ENCODE measurements at regions of chr9 and their contacts with region 1.

Region 1: DNA sequence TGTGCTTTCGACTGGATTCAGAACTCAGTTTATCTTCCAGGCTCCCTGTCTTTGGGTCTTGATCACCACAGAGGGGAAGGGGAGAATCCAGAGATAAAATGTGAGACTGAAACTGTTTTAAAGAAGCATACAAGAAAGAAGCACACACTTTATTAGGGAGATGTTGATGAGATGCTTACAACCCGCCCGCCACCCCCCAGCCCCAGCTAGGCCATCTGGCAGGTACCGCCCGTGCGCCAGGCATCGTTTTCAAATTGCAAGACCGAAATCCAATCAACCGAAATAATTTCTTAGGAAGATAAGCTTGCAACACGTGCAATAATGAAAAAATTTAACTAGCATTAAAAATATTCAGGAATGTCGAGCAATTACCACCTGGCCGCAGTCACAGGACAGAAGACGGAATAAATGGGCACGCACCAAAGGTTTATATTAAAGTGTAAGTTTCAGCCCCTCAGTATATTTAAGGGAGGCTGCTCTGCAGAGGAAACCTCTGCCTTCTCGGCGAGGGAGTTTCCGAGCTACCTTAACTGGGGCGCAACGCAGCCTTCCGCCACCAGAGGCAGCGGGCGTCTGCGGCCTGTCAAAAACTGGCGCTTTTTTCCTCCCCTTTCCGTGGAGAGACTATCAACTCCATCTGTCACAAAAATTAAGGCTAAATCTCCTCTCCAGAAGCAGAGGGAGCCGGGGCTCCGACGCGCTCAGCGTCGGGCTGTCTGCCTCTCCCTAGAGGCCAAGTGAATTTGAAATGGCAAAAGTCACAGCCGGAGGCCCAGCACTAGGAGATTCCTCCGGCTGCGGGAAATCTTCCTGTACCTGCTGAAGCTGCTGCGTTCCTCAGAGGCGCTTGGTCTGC is 996 bp upstream of the GAS1 start:
- DNase-seq: peak; percentile 94

Region 2: GRCh38 chr9:86486891-86487837 is 461.1 kb before region 1 on chr9:
- intact Hi-C with region 1: loop called (anchors 5 to 10 kb)
- DNase-seq: no peak

Region 3: DNA sequence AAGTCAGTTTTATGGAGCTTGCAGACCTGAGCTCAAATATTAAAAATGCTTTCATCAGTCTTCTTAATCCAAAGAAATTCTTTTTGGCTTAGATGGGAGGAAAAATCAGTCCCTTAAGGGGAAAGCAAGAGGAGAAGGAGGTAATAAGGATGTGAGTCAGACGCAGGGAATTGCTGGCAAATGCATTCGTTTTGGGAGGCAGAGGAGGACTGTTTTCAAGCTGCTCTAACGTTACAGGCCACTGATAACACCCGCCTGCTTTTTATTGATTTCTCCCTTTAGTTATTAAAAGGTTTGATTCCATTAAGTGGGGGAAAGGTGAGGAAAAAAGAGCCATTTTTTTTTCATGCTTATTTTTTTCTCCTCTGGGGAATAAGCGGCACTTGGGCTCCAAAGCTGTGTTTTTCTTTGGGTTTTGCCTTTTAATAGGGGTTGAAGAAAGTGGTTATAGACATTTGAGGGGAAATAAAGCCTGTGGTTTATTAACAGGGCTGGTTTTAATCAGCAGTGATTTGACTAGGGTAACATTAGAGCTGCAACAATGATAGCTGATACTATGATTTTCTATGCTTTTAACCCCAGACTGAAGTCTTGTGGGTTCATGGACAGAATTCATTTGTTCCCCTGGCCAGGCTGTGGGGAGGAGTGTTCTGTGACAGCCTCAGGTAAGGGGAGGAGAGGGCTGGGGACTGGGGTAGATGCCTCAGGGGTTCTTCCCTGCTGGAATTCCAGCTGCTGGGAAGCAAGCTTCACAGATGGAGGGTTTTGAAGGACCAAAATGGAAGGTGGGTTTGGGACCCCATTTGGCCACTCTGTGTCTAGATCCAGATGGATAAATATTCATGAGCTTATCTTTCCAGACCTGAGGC is 226.2 kb before region 1 on chr9:
- intact Hi-C with region 1: loop called in 1 of 2 experiments (anchors 10 kb)
- DNase-seq: no peak

Region 4: GRCh38 chr9:87007711-87008366 is 59.5 kb after region 1 on chr9:
- intact Hi-C with region 1: no loop called
- DNase-seq: no peak

Region 5: GRCh38 chr9:87259543-87260518 is 311.5 kb after region 1 on chr9:
- intact Hi-C with region 1: loop called in 1 of 2 experiments (anchors 10 kb)
- DNase-seq: peak; percentile 84